Posterior cingulate gyrus (tissue), 11 donors: ENCODE measurements at regions of chr1 and their contacts with region 1.

Region 1: DNA sequence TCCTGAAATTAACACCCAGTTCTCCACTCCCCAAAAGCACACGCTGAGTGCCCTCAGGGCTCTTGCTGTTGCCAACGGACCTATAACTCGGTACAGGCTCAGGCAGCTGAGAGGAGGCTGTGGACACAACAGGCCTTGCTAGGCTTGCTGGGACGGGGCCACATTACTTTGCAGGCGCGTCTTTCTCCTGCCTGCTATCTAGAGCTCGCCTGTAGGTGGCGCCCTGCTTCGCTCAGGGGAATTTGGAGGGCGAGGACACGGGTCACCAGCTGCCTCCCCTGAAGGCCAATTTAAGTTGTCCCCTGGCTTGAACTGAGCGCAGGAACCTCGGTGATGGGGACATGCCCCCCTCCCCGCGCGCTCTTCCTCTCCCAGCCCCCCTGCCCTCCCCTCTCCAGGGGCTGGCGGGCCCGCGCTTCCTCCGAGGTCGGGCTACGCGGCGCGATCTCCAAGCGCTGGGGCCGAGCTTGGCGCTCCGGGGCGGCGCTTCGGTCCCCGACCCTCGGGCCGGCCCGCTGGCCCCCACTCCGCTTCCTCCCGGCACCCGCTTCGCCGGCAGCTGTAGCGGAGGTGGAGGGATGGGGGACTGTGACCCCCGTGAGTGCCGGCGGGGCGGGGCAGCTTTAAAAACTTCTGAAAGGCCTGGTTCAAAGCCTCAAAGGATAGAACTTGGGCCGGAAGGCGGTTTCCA is 32.4 kb upstream of the NFIA start:
- DNase-seq: peak; percentile 84 to 98 (median 94)

Region 2: GRCh38 chr1:59971464-59971911 is 1078.5 kb before region 1 on chr1:
- intact Hi-C with region 1: loop called (anchors 10 kb)
- DNase-seq: peak; percentile 64 to 97 (median 82)

Region 3: GRCh38 chr1:60848583-60849188 is 201.3 kb before region 1 on chr1:
- intact Hi-C with region 1: loop called (anchors 10 kb)
- DNase-seq: no peak

Region 4: DNA sequence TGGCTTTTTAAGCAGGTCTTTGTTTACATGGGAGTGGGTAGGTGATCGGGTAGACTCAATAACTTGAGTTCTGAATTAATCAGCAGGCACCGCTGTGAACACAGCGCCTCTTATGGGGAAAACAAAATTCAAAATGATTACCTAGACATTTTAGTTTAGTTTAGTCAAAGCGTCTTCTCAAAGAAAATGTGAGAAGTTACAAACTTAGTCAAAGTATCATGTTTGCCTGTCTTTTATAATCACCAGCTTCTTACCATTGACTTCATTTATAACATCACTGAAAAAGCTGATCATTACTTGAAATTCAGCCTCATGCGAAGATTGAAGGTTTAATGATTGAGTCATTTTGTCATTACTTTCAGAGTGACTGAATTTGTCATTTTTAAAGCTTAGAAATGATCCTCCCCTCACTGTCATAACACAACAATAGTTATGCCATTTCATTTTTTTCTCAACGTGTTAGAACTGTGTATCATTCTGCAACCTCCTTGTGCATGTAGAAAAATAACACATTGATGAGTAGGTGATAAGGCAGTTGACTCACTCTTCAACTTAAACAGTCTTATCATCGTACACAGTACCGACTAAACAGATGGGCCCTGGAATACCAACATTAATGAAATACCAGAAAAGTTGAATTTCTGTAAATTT is 220.9 kb after region 1 on chr1:
- intact Hi-C with region 1: loop called (anchors 10 kb)
- DNase-seq: no peak

Region 5: DNA sequence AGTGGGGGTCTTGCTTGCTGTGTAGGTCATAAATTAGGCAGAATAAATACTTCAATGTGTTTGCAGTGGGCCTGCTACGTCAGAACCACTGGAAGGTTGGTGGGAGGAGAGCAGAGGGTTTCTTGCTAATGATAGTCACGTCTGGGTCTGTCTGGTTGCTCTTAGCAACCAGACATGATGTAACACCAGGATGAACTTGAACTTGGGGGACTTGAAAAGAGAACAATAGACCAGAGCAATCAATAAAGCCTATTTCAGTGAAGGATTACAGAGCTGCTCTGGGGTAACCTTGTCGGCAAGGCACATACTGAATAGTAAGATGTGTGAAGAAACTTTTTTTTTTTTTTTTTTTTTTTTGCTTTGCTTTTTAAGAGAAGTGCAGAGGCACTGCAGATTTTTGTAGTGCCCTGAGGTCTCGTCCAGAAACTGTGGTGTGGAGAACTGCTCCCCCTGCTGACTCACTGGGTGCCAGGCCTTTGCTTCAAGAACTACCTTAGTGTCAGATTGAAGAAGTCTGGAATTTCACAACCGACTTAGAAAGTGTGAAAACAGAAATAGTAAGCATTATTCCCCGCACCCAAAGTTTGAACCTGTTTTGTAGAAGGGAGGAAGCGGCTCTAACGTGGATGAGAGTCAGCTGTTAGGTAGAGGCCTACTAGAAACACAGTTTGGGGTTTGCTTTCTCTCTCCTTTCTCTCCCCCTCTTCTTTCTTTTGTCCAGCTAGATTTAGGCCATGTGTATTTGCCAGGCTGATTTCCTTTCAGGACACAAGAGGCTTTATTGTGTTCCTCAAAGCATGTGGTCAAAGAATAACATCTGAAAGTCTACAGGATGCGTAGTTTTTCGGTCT is 403.3 kb after region 1 on chr1:
- intact Hi-C with region 1: loop called (anchors 5 kb)
- DNase-seq: peak; percentile 68 to 96 (median 82)

Region 6: GRCh38 chr1:61641578-61642336 is 591.8 kb after region 1 on chr1:
- intact Hi-C with region 1: loop called (anchors 10 kb)
- DNase-seq: peak; percentile 67 to 96 (median 78)